GM10248 (cell line): ENCODE measurements at regions of chr9 and their contacts with region 1.

Region 1: GRCh38 chr9:21395778-21396717 is 10.8 kb upstream of the IFNA2 start:
- DNase-seq: peak; percentile 54
- CTCF ChIP-seq: peak; percentile 85

Region 2: DNA sequence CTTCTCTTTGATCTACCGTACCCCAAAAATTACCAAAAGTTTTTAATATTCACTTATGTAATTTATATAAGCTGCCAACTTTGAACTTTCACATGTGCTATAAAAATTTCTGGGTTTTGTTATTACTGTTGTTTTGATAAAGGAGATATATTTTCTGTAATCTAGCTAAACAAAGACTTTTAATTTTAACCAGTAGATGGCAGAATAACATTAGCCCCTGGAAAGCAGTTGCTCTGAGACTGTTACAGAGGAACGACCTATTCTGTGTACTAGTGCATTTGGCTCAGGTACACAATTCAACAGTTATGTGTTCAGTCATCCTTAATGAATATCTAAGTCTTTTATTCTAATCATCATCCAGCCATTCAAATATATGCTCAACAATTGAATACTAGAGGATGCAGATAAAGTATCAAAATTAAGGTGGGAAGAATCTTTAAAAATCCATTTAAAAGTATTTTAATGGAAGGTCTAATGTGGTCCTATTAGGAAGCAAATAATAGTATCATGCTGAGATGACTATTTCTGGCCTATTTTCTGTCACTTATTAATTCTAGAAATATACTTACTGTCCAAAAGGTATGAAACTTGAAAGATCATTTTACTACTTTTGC is 69.4 kb before region 1 on chr9:
- CTCF ChIA-PET with region 1: interaction called, 95 read pairs
- POLR2A ChIA-PET with region 1: no interaction called
- DNase-seq: peak; percentile 49
- CTCF ChIP-seq: peak; percentile 35

Region 3: GRCh38 chr9:21340735-21341134 is 55.3 kb before region 1 on chr9:
- CTCF ChIA-PET with region 1: interaction called, 27 read pairs
- POLR2A ChIA-PET with region 1: no interaction called
- DNase-seq: no peak
- CTCF ChIP-seq: no peak

Region 4: GRCh38 chr9:21357479-21358460 is 38.3 kb before region 1 on chr9:
- CTCF ChIA-PET with region 1: interaction called, 13 read pairs
- POLR2A ChIA-PET with region 1: no interaction called
- DNase-seq: peak; percentile 37
- CTCF ChIP-seq: no peak